ENCODE measurements at regions of chr12 and their contacts with region 1.

Region 1: GRCh38 chr12:121793838-121794533 is 498 bp upstream of the RHOF start:
- DNase-seq: peak; percentile 88
- CTCF ChIP-seq: peak; percentile 100

Region 2: DNA sequence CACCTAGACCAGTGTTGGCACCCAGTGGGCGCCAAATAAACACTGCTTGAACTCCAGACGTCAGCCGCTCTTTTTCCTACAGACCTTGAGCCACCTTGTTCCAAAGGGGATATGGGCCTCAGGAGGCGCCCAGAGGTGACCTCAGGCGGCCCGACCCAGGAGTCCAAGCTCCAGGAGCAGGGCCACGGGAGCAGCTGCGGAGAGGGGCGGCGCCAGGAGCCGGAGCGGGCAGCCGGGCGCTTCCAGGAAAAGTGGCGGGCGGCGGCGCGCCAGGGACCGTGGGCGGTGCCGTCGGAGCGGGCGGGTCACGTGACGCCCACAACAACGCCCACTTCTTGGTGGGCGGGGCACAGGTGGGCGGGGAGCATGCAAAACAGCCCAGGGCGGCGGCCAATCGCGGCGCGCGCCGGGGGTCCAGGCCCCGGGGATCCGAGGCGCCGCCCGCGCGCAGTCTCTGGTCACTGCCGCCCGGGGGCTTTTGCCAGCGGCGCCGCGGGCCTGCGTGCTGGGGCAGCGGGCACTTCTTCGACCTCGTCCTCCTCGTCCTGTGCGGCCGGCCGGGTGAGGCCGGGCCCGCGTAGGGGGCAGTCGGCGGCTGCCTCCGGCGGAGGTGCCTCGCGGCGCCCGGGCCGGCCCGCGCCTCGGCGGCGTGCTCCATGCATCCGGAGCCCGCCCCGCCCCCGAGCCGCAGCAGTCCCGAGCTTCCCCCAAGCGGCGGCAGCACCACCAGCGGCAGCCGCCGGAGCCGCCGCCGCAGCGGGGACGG is 167.7 kb before region 1 on chr12 and contains the start of gene ORAI1:
- CTCF ChIA-PET with region 1: interaction called, 14 read pairs
- POLR2A ChIA-PET with region 1: no interaction called
- DNase-seq: peak; percentile 94
- CTCF ChIP-seq: peak; percentile 25

Region 3: DNA sequence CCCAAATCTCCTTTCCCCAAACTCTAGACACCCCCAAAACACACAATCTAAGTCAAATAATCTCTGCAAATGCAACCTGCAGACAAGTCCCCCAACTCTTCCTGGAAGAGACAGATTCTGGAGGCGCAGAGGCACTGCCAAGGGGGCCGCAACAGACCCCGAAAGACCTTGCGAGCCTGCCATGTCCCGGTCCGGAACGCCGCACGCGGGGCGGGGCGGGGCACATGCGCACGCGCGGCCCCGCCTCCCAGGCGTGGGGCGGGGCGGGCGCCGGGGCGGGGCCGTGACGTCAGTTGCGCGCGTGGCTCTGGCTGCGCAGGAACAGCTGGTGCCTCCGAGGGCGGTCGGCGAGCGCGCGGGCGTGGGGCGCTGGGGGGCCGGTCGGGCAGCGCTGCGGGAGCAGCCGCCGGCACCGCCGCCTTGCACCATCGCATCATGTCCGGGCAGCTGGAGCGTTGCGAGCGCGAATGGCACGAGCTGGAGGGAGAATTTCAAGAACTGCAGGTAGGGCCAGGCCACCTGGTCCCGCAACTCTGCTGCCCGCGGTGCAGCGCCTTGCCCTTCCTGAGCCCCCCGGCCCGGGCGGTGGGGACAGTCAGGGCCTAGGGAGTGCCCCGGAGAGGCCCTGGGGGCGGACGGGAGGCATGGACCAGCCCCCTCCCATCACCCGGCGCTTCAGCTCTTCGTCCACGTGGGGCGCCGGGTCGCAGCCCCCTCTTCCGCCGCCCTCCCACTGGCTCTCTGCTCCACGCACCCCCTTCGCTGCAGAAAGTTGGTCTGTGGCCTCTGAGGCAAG is 81.3 kb before region 1 on chr12 and contains the start of gene TMEM120B:
- CTCF ChIA-PET with region 1: interaction called, 58 read pairs
- POLR2A ChIA-PET with region 1: no interaction called
- DNase-seq: peak; percentile 95
- CTCF ChIP-seq: no peak

Region 4: DNA sequence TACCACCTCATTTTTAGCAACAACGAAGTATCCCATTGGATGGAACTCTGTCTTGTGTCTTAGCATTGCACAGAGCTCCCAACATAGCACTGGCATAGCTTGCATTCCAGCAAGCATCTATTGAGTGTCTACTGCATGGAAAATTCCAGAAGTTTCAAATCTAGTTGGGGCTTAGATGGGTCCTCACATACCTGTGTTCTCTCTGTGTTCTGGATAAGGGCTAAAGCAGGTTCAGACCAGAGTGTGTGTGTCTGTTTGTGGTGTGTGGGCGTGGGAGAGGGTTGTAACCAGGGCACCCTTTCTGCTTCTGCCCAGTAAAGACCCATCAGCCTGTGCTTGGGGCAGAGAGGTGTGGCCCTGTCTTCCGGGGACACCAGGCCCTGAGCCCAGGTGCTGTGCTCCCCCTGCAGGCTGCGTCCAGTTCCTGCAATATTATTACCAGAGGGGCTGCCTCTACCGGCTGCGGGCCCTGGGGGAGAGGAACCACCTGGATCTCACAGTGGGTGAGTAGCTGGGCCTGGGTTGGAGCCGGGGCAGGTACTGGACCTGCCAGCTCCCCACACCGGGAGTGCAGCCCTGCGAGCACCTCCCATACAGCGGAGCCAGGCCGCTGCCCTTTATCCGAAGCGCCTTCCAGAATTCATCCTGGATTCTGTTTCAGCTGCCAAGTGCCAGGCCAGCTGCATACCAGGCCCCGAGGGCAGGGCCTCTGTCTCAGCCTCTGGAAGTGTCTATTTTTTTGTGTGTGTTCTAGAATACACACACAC is 20.8 kb before region 1 on chr12:
- CTCF ChIA-PET with region 1: interaction called, 533 read pairs
- POLR2A ChIA-PET with region 1: no interaction called
- DNase-seq: peak; percentile 93
- CTCF ChIP-seq: peak; percentile 92

Region 5: DNA sequence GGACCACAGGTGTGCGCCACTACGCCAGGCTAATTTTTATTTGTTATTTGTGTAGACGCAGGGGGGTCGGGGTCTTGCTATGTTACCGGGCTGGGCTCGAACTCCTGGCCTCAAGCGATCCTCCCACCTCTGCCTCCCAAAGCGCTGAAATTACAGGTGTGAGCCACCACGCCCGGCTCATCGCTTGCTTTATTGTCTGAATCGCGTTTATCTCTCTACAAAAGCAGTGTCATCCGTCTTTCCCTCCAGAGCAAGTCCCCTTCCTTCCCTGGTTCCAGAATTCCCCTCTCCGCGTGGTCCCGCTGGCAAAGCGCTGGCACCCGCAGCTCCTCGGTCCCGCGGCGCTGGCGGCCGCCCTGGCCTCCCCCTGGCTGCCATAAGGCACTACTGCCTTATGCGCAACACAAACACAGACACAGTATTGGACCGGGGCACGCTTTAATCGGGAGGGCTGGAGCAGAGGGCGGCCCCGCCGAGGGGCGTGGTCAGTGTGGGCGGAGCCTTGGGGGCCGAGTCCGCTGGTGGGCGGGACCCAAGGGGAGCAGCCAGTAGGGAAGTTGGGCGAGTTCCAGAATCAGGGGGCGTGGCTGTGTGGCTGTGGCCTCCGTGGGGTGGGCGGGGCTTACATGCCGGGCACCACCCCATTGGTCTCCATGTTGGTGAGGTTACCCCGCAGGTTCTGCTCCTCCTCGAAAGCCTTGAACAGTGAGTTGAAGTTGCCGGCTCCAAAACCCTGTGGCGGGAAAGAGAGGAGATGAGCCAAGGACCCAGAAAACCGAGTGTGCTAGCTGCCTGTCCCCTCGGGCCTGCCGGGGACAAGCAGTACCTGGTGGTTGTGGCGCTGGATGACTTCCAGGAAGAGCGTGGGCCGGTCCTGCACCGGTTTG is 45.4 kb after region 1 on chr12:
- CTCF ChIA-PET with region 1: interaction called, 52 read pairs
- POLR2A ChIA-PET with region 1: interaction called, 5 read pairs
- DNase-seq: peak; percentile 100
- CTCF ChIP-seq: no peak

Region 6: DNA sequence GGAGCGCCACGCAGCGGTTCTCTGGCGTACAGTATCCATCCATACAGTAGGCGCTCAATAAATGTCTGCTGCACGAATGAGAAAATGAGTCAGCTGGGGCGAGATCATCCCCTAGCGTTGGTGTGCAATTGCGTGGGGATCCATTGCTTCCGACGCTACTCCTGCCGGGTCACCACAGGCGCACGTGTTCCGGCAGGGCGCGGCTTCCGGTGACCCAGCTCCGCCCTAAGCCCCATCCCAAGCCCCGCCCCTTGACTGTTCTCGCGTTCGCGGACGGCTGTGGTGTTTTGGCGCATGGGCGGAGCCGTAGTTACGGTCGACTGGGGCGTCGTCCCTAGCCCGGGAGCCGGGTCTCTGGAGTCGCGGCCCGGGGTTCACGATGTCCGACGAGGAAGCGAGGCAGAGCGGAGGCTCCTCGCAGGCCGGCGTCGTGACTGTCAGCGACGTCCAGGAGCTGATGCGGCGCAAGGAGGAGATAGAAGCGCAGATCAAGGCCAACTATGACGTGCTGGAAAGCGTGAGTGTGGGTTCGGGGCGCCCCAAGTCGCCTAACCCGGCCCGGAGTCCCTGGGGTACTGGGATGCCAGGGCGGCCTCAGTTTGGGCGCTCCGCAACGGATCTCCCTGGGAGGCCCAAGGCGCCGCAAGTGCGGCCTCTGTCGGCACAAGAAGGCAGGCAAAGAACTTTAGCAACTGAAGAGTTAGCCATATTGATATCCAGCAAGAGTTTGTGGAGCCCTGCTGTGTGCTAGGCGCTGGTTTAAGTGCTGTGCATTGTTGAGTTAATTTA is 94.7 kb after region 1 on chr12 and contains the start of gene PSMD9:
- CTCF ChIA-PET with region 1: interaction called, 102 read pairs
- POLR2A ChIA-PET with region 1: interaction called, 10 read pairs
- DNase-seq: peak; percentile 99
- CTCF ChIP-seq: peak; percentile 66

Region 7: GRCh38 chr12:122123051-122123760 is 329.2 kb after region 1 on chr12:
- CTCF ChIA-PET with region 1: interaction called, 14 read pairs
- POLR2A ChIA-PET with region 1: no interaction called
- DNase-seq: peak; percentile 83
- CTCF ChIP-seq: peak; percentile 70

Measured in GM10248 (cell line).